Transverse colon (tissue), 4 donors: ENCODE measurements at regions of chr9 and their contacts with region 1.

Region 1: DNA sequence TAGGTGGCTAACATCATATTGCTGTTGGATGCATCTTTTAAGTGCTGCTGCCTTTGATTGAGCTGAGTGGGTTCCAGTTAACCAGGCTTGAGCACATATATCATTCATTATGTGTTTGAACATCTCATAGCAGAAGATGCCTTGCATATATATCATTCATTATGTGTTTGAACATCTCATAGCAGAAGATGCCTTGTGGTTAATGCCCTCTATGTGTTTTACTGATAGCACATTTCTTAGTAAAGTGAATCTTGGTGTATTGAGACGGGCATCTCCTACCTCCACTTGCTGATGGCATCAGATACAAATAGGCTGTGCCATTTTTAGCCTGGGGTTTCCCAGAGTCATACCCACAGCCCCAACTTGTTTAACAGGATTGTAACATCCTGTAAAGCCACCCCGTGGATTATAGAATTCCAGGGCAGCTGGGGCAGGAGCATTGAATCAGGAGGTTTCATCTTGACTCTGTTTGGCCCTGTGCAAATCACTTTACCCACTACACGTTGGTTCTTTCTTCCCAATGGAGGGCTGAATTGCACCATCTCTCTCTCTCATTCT is 26.5 kb downstream of the MTAP start:
- DNase-seq: no peak
- H3K4me3 ChIP-seq: no peak overlapping the region
- H3K27ac ChIP-seq: no peak overlapping the region
- H3K4me1 ChIP-seq: peaks cover 0 to 13% (median 4%) of the 10 kb centered on the region in 4 donors
- H3K27me3 ChIP-seq: no peaks in the 10 kb centered on the region
- CTCF ChIP-seq: no peak
- EP300 ChIP-seq: no peak
- POLR2A ChIP-seq: no peak

Region 2: DNA sequence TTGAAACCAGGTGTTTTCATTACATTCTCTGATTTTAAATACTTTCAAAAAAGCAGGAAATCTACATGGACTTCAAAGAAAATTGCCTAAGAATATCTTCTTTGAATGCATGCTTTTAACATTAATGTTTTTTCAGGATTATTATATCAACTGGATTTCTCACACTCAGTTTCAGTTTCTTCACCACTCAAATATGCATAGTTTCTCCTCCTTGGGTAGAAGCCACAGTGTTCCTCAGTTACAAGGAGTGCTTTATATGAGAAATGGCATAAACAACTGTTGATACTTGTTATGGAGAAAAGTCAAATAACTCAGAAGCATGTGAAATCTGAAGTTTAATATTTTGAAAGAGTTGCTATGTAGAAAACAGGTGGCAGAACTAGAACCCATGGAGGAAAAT is 814.6 kb after region 1 on chr9:
- in situ Hi-C with region 1: no loop called
- intact Hi-C with region 1: loop called (anchors 5 kb)
- DNase-seq: no peak
- H3K4me3 ChIP-seq: no peak overlapping the region
- H3K27ac ChIP-seq: no peak overlapping the region
- H3K4me1 ChIP-seq: no peaks in the 10 kb centered on the region
- H3K27me3 ChIP-seq: no peaks in the 10 kb centered on the region
- CTCF ChIP-seq: no peak
- EP300 ChIP-seq: no peak
- POLR2A ChIP-seq: no peak